ENCODE measurements at regions of chr10 and their contacts with region 1.

Region 1: GRCh38 chr10:70404036-70404786 is at the start of gene EIF4EBP2:
- DNase-seq: peak; percentile 98
- ATAC-seq: peak; percentile 90
- H3K4me3 Mint-ChIP-seq: peak within 1 kb of the TSS; percentile 86
- H3K27ac Mint-ChIP-seq: peak within 1 kb of the TSS; percentile 90
- H3K4me1 Mint-ChIP-seq: peaks cover 35% of the 10 kb centered on the region
- H3K27me3 Mint-ChIP-seq: no peaks in the 10 kb centered on the region
- total RNA-seq, gene EIF4EBP2: 58.7 to 60.8 TPM

Region 2: GRCh38 chr10:70206762-70207161 is 197.4 kb before region 1 on chr10:
- CTCF ChIA-PET with region 1: no interaction called
- POLR2A ChIA-PET with region 1: no interaction called
- DNase-seq: no peak
- ATAC-seq: no peak
- H3K4me3 Mint-ChIP-seq: no peak overlapping the region
- H3K27ac Mint-ChIP-seq: no peak overlapping the region
- H3K4me1 Mint-ChIP-seq: no peaks in the 10 kb centered on the region
- H3K27me3 Mint-ChIP-seq: no peaks in the 10 kb centered on the region

Region 3: DNA sequence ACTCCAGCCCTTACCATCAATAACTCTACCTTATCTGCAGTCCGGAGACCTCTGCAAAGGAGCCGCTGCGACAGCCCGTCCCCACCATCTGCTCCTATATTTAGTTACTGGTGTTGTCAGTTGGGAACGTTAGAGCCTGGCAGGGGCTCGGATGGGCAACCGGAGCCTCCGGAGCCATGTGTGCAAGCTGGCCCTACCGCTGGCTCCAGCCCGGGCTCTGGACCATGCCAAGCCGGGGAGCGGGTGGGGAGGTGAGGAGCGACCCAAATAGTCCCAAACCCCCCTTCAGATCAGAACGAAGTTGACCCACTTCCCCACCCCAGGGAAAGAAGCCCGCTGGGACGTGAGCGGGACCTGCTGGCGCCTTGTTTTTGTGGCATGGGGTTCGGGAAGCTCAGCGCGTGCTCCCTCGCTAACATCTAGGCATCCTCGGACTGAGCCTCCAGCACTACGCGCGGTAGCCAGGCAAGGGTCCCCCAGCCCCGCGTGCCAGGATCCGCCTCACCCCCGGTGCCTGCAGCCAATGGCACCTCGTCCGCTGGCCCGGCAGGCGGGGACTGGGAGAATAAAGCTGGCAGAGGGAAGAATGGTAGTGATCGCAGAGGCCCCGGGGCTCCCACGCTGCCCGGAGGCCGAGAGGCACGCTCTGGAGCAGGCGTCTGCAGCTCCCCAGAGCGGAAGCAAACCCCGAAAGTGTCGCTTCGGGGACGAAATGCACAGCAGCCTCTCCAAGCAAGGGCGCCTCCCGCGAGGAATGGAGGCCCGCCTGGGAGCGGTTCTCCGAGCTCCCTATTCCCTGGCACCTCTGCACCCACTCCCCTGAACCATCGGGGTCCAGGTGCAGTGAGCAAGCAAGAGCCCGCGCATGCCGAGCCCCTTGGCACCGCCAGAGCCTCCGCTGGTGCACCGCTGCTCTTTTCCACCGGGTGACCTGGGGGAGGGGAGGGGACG is 22.5 kb before region 1 on chr10:
- CTCF ChIA-PET with region 1: interaction called, 26 read pairs
- POLR2A ChIA-PET with region 1: interaction called, 10 read pairs
- DNase-seq: peak; percentile 60
- ATAC-seq: peak; percentile 47
- H3K4me3 Mint-ChIP-seq: peak overlapping the region; percentile 83
- H3K27ac Mint-ChIP-seq: peak overlapping the region; percentile 60
- H3K4me1 Mint-ChIP-seq: peaks cover 23% of the 10 kb centered on the region
- H3K27me3 Mint-ChIP-seq: peaks cover 14% of the 10 kb centered on the region

Region 4: DNA sequence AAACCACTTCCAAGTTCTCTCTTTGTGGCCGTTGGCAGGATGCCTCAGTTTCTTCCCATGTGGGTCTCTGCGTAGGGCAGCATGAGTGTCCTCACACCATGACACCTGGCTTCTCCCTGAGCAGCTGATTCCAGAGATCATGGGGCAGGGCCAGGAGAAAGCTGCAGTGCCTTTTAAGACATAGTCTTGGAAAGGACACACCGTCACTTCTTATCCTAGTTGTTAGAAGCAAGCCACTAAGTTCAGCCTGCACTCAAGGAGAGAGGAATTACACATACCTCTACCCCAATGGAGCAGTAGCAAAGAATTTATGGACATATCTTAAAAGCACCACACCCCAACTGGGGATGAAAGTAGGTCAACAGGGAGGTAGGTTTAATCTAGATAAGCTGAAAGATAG is 20.9 kb after region 1 on chr10:
- CTCF ChIA-PET with region 1: interaction called, 11 read pairs
- POLR2A ChIA-PET with region 1: interaction called, 4 read pairs
- DNase-seq: no peak
- ATAC-seq: no peak
- H3K4me3 Mint-ChIP-seq: no peak overlapping the region
- H3K27ac Mint-ChIP-seq: no peak overlapping the region
- H3K4me1 Mint-ChIP-seq: no peaks in the 10 kb centered on the region
- H3K27me3 Mint-ChIP-seq: no peaks in the 10 kb centered on the region

Region 5: DNA sequence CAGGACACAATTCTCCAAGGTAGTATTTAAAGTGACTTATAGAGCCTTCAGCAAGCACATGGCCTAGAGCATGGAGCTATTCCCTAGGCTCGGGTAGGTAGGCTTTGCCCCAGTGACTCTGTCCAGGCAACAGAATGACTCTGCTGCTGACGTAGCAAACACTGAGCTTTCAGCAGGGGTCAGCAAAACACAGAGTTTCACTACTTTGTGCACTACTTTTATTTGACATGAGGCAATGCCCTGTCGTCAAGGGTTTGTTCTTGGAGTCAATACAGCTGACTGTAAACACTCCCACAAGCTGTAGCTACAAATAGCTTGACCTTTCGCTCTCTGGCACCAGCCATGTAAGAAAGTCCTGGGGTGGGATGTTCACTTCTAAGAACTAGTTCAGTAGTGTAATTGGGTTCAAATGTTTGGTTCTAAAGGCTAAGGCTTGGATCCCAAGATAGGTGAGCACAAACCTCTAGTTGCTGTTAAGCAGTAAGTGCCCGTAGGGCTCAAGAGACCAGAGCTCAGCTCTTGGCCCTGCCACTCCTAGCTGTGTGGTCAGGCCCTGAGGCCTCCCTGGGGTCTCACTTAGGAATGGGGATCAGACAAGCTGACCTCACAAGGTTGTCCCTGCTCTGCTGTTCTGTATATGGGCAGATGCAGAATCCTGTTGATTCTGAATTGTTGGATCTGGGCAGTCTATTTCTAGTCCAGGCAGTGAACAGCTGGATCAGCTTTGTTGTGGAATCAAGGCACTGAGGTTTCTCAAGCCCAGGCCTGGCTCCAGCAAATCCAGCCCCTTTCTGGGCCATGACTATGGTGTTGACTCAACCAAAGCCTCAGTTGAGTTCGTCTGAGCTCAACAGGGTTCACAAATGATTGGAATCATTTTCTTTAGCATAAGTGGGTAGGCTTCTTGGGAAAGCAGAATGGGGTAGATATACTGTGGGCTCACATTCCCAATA is 26.6 kb after region 1 on chr10:
- CTCF ChIA-PET with region 1: interaction called, 11 read pairs
- POLR2A ChIA-PET with region 1: interaction called, 4 read pairs
- DNase-seq: no peak
- ATAC-seq: no peak
- H3K4me3 Mint-ChIP-seq: no peak overlapping the region
- H3K27ac Mint-ChIP-seq: no peak overlapping the region
- H3K4me1 Mint-ChIP-seq: peaks cover 22% of the 10 kb centered on the region
- H3K27me3 Mint-ChIP-seq: no peaks in the 10 kb centered on the region